HepG2 (cell line): ENCODE measurements at regions of chr17 and their contacts with region 1.

Region 1: GRCh38 chr17:17496189-17497064 is at the start of gene RASD1:
- DNase-seq: peak; percentile 59
- ATAC-seq: peak; percentile 86
- H3K4me3 ChIP-seq: peak within 1 kb of the TSS; percentile 53 to 71 (median 65); a peak in 5 of 6 replicates
- H3K27ac ChIP-seq: peak within 1 kb of the TSS; percentile 34
- H3K4me1 ChIP-seq: peaks cover 26% of the 10 kb centered on the region
- H3K27me3 ChIP-seq: peaks cover 4 to 39% of the 10 kb centered on the region in 2 experiments; a peak in 4 of 5 replicates
- CTCF ChIP-seq: peak; percentile 81
- EP300 ChIP-seq: 0 out of 4 replicates have a peak, but pooled peaks of 1 of the 2 experiments have one; percentile 13
- POLR2A ChIP-seq: peak; percentile 89 to 97
- RAD21 ChIP-seq: peak; percentile 96
- total RNA-seq, gene RASD1: 1.4 and 1.6 TPM in 2 replicates

Region 2: GRCh38 chr17:17356149-17356930 is 140.1 kb before region 1 on chr17:
- CTCF ChIA-PET with region 1: interaction called, 35 read pairs
- POLR2A ChIA-PET with region 1: interaction called, 15 read pairs
- in situ Hi-C with region 1: loop called (anchors 5 kb)
- intact Hi-C with region 1: loop called (anchors 1 kb)
- DNase-seq: peak; percentile 73
- ATAC-seq: peak; percentile 74
- H3K4me3 ChIP-seq: no peak overlapping the region; a peak in 1 of 6 replicates
- H3K27ac ChIP-seq: no peak overlapping the region
- H3K4me1 ChIP-seq: peaks cover 36% of the 10 kb centered on the region
- H3K27me3 ChIP-seq: peaks cover 0 to 13% of the 10 kb centered on the region in 2 experiments; a peak in 1 of 5 replicates
- CTCF ChIP-seq: peak; percentile 96
- EP300 ChIP-seq: no peak; a peak in 1 of 4 replicates
- POLR2A ChIP-seq: no peak
- RAD21 ChIP-seq: peak; percentile 99

Region 3: DNA sequence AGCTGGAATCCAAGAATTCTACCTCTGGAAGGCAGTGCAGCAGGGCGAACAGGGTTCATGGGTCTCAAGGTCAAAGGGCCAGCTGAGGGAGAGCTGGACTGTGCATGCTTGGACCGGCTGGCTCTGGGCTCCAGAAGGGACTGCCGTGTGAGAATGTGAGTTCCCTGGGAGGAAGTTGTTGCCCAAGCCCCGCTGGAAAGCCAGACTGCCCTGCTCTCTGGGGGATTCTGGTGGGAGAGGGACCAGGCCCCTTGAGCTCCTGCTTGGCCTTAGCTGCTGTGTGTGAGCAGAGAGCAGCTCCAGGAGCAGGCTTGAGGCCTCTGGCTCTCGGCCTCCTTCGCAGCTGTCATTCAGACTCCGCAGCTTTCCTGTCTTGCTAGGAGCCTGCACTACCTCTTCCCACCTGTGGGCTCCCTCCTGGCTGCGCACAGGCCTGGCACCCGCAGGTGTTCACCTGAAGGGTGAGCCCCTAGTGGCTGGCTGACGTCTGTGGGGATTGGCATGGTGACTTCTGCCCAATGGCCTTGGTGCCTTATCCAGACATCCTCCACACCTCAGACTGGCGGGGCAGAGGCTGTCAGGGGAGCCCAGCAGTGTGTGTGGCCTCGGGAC is 108.5 kb before region 1 on chr17:
- CTCF ChIA-PET with region 1: no interaction called
- POLR2A ChIA-PET with region 1: interaction called, 13 read pairs
- in situ Hi-C with region 1: no loop called
- intact Hi-C with region 1: no loop called
- DNase-seq: peak; percentile 77
- ATAC-seq: peak; percentile 95
- H3K4me3 ChIP-seq: peak overlapping the region in 2 of 3 experiments; percentile 25 to 62; a peak in 3 of 6 replicates
- H3K27ac ChIP-seq: no peak overlapping the region
- H3K4me1 ChIP-seq: peaks cover 19% of the 10 kb centered on the region
- H3K27me3 ChIP-seq: peaks cover 0 to 14% of the 10 kb centered on the region in 2 experiments; a peak in 2 of 5 replicates
- CTCF ChIP-seq: peak; percentile 75
- EP300 ChIP-seq: no peak
- POLR2A ChIP-seq: no peak
- RAD21 ChIP-seq: peak; percentile 84

Region 4: DNA sequence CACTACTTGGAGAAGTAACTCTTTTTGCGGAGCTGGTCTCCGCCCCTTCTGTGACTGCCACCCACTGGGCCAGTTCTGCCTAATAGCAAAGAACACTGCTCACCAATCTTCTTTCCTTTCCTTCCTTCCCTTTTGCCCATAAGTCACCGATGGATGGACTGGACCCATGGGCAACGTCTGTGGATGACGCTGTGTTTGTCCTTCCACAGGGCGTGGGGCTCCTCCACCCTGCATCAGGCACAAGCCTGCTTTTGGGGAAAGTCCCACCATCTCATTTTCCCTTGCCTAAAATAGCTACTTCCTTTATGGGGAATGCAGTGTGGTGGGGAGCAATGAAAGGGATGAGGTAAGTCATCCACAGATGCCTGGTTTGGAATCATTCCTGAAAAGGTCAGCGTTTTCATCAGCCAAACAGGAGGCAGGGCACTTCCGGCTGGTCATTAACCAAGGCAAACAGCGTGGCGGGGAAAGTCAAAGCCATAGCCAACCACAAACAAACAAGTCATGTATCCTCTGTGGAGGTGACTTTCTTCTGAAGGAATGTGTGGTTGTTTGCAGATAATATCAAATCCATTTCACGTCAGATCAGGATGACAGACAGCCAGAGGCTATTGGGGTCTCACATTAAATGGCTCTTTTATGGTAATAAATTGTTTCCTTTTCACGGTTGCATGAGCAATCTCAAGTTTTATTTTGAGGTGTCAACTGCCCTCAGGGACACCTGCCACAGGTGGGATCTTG is 50.3 kb before region 1 on chr17:
- CTCF ChIA-PET with region 1: no interaction called
- POLR2A ChIA-PET with region 1: interaction called, 57 read pairs
- in situ Hi-C with region 1: no loop called
- intact Hi-C with region 1: loop called (anchors 5 kb)
- DNase-seq: peak; percentile 98
- ATAC-seq: peak; percentile 89
- H3K4me3 ChIP-seq: peak overlapping the region; percentile 46 to 64 (median 57); a peak in 4 of 6 replicates
- H3K27ac ChIP-seq: peak overlapping the region; percentile 65
- H3K4me1 ChIP-seq: peaks cover 79% of the 10 kb centered on the region
- H3K27me3 ChIP-seq: 0 out of 5 replicates have a peak, but pooled peaks cover 0 to 13% of the 10 kb centered on the region in 2 experiments
- CTCF ChIP-seq: peak; percentile 31
- EP300 ChIP-seq: peak; percentile 75 to 98; a peak in 3 of 4 replicates
- POLR2A ChIP-seq: peak in 1 of 2 experiments; percentile 2; a peak in 1 of 4 replicates
- RAD21 ChIP-seq: no peak

Region 5: DNA sequence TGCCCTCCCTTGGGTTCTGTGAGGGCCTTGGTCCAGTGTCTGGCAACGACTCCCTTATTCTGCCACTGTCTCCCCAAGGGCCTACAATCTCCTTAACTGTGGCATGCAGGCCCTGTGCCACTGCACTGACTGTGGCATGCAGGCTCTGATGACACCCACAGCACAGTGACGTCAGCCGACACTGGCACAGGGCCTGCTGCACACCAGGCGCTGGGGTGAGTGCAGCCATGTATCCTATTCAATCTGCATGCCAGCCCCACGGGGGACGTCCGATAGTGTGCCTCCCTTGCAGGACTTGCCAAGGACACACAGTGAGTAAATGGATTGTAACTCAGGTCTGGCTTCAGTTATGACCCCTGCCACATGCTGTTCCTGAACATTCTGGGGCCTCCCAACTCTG is 39.5 kb after region 1 on chr17:
- CTCF ChIA-PET with region 1: no interaction called
- POLR2A ChIA-PET with region 1: interaction called, 47 read pairs
- in situ Hi-C with region 1: no loop called
- intact Hi-C with region 1: loop called (anchors 2 kb)
- DNase-seq: no peak
- ATAC-seq: no peak
- H3K4me3 ChIP-seq: no peak overlapping the region
- H3K27ac ChIP-seq: no peak overlapping the region
- H3K4me1 ChIP-seq: peaks cover 73% of the 10 kb centered on the region
- H3K27me3 ChIP-seq: no peaks in the 10 kb centered on the region
- CTCF ChIP-seq: no peak
- EP300 ChIP-seq: no peak
- POLR2A ChIP-seq: no peak
- RAD21 ChIP-seq: no peak

Region 6: GRCh38 chr17:17580662-17581470 is 84.4 kb after region 1 on chr17:
- CTCF ChIA-PET with region 1: interaction called, 3 read pairs
- POLR2A ChIA-PET with region 1: interaction called, 12 read pairs
- in situ Hi-C with region 1: no loop called
- intact Hi-C with region 1: no loop called
- DNase-seq: peak; percentile 77
- ATAC-seq: peak; percentile 96
- H3K4me3 ChIP-seq: peak overlapping the region in 1 of 3 experiments; percentile 55; a peak in 2 of 6 replicates
- H3K27ac ChIP-seq: peak overlapping the region; percentile 94
- H3K4me1 ChIP-seq: peaks cover 59% of the 10 kb centered on the region
- H3K27me3 ChIP-seq: no peaks in the 10 kb centered on the region
- CTCF ChIP-seq: peak; percentile 32; the same call in 1 of the 2 replicates
- EP300 ChIP-seq: peak in 1 of 2 experiments; percentile 74; a peak in 2 of 4 replicates
- POLR2A ChIP-seq: peak; percentile 51 to 59; a peak in 2 of 4 replicates
- RAD21 ChIP-seq: no peak

Region 7: DNA sequence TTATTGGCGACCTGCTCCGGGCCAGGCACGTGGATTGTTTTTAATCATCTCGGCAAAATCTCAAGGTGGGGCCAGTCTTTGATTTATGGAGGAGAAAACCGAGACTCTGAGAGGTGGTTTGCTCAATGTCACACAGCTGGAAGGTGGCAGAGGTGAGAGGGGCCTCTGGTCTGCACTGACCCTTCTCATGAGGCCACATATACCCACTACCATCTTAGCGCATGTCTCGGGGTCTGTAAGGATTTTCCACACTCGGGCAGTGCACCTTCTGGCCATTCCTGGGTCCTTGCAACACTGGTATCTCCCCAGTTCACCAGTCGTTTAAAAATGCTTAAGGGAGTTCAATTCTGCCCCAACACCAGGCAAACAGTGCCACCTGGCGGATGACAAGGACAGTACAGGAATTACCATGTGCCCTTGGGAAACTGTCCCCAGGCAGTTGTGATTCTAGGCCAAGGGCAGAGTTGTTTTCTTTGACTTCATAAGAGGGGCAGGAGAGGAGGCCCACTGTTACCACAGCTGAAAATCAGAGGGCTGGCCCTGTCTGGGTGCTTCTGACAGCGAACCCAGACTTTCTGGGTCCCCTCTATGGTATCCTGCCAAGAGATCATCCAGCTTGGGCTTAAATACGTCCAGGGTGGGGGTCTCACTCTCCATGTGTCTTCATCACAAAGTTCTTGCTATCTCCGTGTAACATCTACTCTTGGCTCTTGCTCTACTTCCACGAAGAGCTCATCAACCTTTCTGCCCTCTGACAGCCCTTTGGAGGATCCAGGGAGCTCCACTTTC is 145.4 kb after region 1 on chr17:
- CTCF ChIA-PET with region 1: interaction called, 7 read pairs
- POLR2A ChIA-PET with region 1: interaction called, 11 read pairs
- in situ Hi-C with region 1: loop called (anchors 10 kb)
- intact Hi-C with region 1: loop called (anchors 1 kb)
- DNase-seq: peak; percentile 74
- ATAC-seq: peak; percentile 88
- H3K4me3 ChIP-seq: no peak overlapping the region
- H3K27ac ChIP-seq: no peak overlapping the region
- H3K4me1 ChIP-seq: peaks cover 13% of the 10 kb centered on the region
- H3K27me3 ChIP-seq: peaks cover 0 to 5% of the 10 kb centered on the region in 2 experiments; a peak in 2 of 5 replicates
- CTCF ChIP-seq: peak; percentile 96
- EP300 ChIP-seq: no peak
- POLR2A ChIP-seq: no peak
- RAD21 ChIP-seq: peak; percentile 89